Naive thymus-derived CD8-positive, alpha-beta T cell (primary cell): ENCODE measurements at regions of chr1 and their contacts with region 1.

Region 1: DNA sequence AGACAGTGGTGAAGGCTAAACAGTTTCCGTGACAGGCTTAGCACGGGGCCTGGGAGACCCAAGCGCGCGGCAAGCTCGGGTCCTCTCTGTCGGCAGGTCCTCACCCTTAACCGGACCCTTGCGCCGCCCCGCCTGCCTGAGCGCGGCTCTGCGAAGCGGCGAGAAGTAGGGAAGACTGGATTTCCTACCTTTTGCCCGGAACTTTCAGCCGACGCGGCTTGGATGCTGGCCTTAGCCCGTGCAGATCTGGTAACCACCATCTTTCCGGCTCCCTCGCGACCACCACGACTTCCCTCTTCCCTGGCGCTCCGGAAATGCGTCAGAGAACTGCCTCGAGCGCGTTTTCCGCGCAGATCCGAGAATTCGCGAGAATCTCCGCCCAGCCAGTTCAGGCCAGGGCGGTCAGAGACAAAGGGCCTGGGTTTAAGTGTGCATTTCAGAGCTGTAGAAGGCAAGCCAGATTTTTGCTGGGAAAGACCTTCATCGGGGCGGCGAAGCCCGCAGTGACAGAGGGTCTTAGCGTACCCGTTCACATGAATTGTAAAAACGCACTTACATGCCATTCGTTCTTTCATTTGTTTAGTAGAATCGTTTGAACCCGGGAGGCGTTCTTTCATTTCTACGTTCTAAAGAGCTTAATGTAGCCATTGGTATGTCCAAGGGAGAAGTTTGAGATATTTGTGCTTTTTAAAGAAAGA is at the start of gene DNTTIP2:
- DNase-seq: peak; percentile 72 to 94 (median 88)
- ATAC-seq: peak; percentile 91 to 92
- H3K4me3 Mint-ChIP-seq: peak within 1 kb of the TSS; percentile 90 to 99 (median 99)
- H3K27ac Mint-ChIP-seq: peak within 1 kb of the TSS; percentile 97 to 100 (median 99)
- H3K4me1 Mint-ChIP-seq: peaks cover 25 to 50% (median 45%) of the 10 kb centered on the region in 4 donors
- H3K27me3 Mint-ChIP-seq: no peaks in the 10 kb centered on the region
- polyA plus RNA-seq, gene DNTTIP2: 68.8 to 72.9 (median 70.9) TPM

Region 2: DNA sequence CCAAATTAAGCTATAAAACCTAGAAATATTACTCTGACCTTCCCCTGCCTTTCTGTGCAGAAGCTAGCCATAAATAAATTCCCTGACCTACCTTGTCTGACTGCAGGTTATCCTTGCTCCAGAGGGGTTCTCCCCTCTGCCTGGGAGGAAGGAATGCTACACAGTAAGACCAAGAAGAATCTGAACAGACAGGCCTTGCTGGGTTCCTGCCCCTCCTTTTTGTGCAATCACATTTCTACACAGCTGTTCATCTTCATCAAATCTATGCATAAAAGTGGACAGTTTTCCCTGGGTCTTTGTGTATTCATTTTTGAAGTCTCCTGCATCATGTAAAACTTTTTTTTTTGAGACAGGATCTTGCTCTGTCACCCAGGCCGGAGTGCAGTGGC is 50.7 kb before region 1 on chr1:
- POLR2A ChIA-PET with region 1: no interaction called
- DNase-seq: no peak
- ATAC-seq: no peak
- H3K4me3 Mint-ChIP-seq: no peak overlapping the region
- H3K27ac Mint-ChIP-seq: no peak overlapping the region
- H3K4me1 Mint-ChIP-seq: peaks cover 0 to 6% (median 0%) of the 10 kb centered on the region in 4 donors
- H3K27me3 Mint-ChIP-seq: peaks cover 0 to 3% (median 0%) of the 10 kb centered on the region in 5 donors

Region 3: GRCh38 chr1:93909146-93910050 is 30.4 kb after region 1 on chr1 and contains the start of gene GCLM:
- POLR2A ChIA-PET with region 1: interaction called, 33 read pairs
- DNase-seq: peak; percentile 83 to 93 (median 90)
- ATAC-seq: peak; percentile 90 to 91
- H3K4me3 Mint-ChIP-seq: peak within 1 kb of the TSS; percentile 83 to 95 (median 92)
- H3K27ac Mint-ChIP-seq: peak within 1 kb of the TSS; percentile 75 to 96 (median 94)
- H3K4me1 Mint-ChIP-seq: peaks cover 13 to 40% (median 32%) of the 10 kb centered on the region in 4 donors
- H3K27me3 Mint-ChIP-seq: peaks cover 0 to 5% (median 0%) of the 10 kb centered on the region in 5 donors
- polyA plus RNA-seq, gene GCLM: 11.3 to 18.2 (median 14.2) TPM